ENCODE measurements at regions of chr7 and their contacts with region 1.

Region 1: DNA sequence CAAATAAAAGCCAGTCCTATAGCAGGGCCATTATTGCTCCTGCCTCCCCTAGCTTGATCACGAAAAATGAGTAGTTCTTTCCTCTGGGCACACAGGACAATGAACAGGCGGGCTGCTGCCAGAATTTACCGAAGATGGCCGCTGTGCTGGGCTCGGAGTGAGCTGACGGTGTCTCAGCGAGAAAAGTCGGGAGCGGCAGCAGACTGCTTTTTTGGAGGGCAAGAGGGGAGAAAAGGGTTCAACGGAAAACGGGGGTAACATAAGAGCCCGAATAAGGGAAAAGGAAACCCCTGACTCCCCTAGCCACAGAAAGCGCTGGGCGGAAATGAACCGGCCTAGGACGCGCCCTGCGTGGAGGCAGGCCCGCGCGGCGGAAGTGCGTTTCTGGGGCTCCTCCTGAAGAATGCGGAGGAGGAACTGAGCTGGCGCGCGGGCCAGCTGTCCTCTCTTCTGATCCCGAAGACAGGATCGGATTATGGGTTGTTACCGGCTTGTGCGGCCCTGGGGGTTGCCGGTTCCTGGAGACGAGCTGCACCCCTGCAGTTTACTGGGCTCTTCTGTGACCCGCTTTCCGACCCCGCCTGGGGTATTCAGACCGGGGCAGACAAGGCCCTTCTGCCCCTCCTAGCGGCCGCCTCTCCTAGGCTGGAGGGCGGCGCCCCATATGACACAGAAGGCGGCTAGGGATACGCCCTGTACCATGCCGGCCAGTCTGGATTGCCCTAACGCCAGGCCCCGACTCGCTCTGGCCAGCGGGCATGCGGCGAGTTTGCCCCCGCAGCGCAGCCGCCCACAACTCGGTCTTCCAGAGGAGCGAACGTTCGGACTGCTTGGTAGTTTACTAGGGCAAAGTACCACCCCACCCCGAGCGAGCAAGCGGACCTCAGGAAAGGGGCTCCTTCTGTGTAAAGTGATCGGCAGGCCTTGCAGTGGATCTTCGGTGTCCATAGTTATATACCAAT is 30.1 kb upstream of the KMT2E start:
- DNase-seq: peak; percentile 88
- H3K4me3 Mint-ChIP-seq: peak overlapping the region; percentile 98
- H3K27ac Mint-ChIP-seq: peak overlapping the region; percentile 99
- H3K4me1 Mint-ChIP-seq: peaks cover 72% of the 10 kb centered on the region
- H3K27me3 Mint-ChIP-seq: no peaks in the 10 kb centered on the region

Region 2: DNA sequence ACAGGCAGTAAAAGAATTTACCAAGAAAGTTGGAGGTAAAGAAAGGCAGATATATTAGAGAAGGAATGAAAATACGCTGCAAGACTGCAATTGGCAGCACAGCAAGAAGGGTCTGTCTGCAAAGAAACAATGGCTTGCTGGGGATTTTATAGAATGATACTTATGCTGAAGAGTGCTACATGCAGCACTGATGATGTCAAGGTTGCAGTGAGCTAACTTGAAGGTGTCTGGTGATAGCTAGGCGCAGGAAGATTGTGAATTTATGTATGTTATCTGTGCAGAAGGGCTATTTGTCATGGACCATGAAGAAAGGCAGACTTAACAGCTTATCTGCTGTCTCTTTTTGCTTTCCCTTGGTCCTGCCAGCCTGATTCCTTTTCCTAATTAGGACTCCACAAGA is 289.1 kb before region 1 on chr7:
- CTCF ChIA-PET with region 1: no interaction called
- POLR2A ChIA-PET with region 1: no interaction called
- DNase-seq: no peak
- H3K4me3 Mint-ChIP-seq: no peak overlapping the region
- H3K27ac Mint-ChIP-seq: no peak overlapping the region
- H3K4me1 Mint-ChIP-seq: no peaks in the 10 kb centered on the region
- H3K27me3 Mint-ChIP-seq: no peaks in the 10 kb centered on the region

Region 3: DNA sequence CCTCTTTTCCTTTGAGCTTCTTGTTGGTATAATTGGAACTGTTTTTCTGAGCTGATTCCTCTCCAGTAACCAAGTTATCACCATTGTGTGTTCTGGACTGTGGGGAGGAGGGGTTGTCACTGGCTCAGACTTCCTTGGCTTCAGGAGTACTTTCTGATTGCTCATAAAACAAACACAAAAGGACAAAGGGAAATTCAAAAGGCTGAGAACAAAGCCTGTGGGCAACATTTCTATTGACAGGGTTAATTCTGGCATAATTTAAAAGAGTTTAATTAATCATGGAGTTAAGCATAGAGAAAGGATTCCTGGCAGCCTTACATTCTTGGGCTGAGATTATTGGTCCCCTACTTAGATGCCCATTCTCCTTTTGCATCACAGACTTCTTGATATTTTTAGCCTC is 192.8 kb before region 1 on chr7:
- CTCF ChIA-PET with region 1: no interaction called
- POLR2A ChIA-PET with region 1: no interaction called
- DNase-seq: no peak
- H3K4me3 Mint-ChIP-seq: no peak overlapping the region
- H3K27ac Mint-ChIP-seq: no peak overlapping the region
- H3K4me1 Mint-ChIP-seq: no peaks in the 10 kb centered on the region
- H3K27me3 Mint-ChIP-seq: peaks cover 12% of the 10 kb centered on the region

Region 4: DNA sequence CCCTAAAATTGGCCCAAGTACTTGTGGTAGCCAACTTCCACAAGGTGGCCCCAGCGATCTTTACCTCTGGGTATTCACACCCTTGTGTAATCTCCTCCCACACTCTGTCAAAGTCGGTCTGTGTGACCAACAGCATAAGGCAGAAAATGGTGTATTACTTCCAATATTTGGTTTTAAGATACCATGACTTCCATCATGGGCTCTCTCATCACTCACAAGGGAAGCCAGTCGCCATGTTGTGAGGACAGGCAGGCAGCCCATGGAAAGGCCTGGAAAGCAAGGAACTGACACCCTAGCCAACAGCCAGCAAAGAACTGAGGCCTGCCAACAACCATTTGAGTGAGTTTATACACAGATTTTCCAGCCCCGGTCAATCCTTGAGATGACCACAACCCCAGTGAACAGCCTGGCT is 60.8 kb before region 1 on chr7:
- CTCF ChIA-PET with region 1: interaction called, 16 read pairs
- POLR2A ChIA-PET with region 1: interaction called, 7 read pairs
- DNase-seq: peak; percentile 82
- H3K4me3 Mint-ChIP-seq: no peak overlapping the region
- H3K27ac Mint-ChIP-seq: no peak overlapping the region
- H3K4me1 Mint-ChIP-seq: peaks cover 10% of the 10 kb centered on the region
- H3K27me3 Mint-ChIP-seq: peaks cover 6% of the 10 kb centered on the region

Region 5: GRCh38 chr7:104956753-104957450 is 27.0 kb before region 1 on chr7:
- CTCF ChIA-PET with region 1: interaction called, 18 read pairs
- POLR2A ChIA-PET with region 1: interaction called, 42 read pairs
- DNase-seq: peak; percentile 65
- H3K4me3 Mint-ChIP-seq: peak overlapping the region; percentile 54
- H3K27ac Mint-ChIP-seq: peak overlapping the region; percentile 98
- H3K4me1 Mint-ChIP-seq: peaks cover 56% of the 10 kb centered on the region
- H3K27me3 Mint-ChIP-seq: no peaks in the 10 kb centered on the region

Region 6: DNA sequence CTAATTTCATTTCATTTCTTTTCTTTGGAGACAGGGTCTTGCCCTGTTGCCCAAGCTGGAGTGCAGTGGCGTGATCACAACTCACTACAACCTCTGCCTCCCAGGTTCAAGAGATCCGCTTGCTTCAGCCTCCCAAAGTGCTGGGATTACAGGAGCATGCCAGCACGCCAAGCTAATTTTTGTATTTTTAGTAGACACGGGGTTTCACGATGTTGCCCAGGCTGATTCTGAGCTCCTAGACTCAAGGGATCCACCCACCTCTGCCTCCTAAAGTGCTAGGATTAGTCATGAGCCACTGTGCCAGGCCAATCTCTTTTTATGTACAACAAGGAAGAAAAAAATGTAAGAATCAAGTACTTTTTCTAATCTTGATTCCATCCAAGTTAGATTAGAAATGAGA is 19.4 kb after region 1 on chr7:
- CTCF ChIA-PET with region 1: interaction called, 66 read pairs
- POLR2A ChIA-PET with region 1: interaction called, 822 read pairs
- DNase-seq: peak; percentile 34
- H3K4me3 Mint-ChIP-seq: peak overlapping the region; percentile 43
- H3K27ac Mint-ChIP-seq: peak overlapping the region; percentile 61
- H3K4me1 Mint-ChIP-seq: peaks cover 84% of the 10 kb centered on the region
- H3K27me3 Mint-ChIP-seq: no peaks in the 10 kb centered on the region

Region 7: GRCh38 chr7:105067691-105068090 is 83.8 kb after region 1 on chr7:
- CTCF ChIA-PET with region 1: interaction called, 13 read pairs
- POLR2A ChIA-PET with region 1: interaction called, 3 read pairs
- DNase-seq: no peak
- H3K4me3 Mint-ChIP-seq: no peak overlapping the region
- H3K27ac Mint-ChIP-seq: no peak overlapping the region
- H3K4me1 Mint-ChIP-seq: peaks cover 11% of the 10 kb centered on the region
- H3K27me3 Mint-ChIP-seq: no peaks in the 10 kb centered on the region

Region 8: DNA sequence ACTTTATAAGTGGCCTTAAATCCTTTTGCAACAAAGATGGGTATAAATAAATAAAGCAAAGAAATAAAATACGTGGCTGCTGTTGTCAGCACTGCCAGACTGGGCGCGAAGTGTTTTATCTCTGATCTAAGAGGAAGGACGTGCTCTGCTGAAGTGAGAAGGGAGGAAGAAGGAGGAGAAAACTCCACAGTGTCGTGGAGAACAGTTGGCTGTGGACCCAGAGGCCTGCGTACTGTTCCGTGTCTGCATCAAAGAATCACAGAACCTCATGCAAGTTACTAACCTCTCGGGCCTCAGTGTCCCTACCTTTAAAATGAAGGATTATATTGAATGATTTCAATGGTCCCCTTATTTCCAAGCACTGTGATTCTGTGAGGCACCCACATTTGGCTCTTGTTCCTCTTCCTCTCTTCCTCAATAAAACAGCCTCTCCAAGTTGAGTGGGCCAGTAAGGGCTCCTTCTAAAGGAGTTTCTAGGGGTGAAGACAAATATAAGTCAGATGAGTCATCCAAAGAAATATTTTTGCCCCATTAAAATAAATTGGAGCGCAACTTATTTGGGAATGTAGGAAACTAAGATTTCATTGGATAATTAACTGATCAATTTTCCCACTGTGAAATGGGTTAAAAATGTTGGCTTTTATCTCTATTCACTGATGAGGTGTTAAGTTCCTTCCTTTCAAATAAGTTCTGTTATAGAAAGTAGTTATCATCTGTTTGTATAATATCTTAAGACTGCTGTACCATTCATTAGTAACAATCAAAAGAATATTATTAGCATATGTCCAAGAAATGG is 724.3 kb after region 1 on chr7:
- CTCF ChIA-PET with region 1: no interaction called
- POLR2A ChIA-PET with region 1: no interaction called
- DNase-seq: no peak
- H3K4me3 Mint-ChIP-seq: no peak overlapping the region
- H3K27ac Mint-ChIP-seq: no peak overlapping the region
- H3K4me1 Mint-ChIP-seq: peaks cover 19% of the 10 kb centered on the region
- H3K27me3 Mint-ChIP-seq: no peaks in the 10 kb centered on the region